Activated naive CD4-positive, alpha-beta T cell treated with anti-CD3 and anti-CD28 coated beads for 36 hours (primary cell): ENCODE measurements at regions of chr1 and their contacts with region 1.

Region 1: DNA sequence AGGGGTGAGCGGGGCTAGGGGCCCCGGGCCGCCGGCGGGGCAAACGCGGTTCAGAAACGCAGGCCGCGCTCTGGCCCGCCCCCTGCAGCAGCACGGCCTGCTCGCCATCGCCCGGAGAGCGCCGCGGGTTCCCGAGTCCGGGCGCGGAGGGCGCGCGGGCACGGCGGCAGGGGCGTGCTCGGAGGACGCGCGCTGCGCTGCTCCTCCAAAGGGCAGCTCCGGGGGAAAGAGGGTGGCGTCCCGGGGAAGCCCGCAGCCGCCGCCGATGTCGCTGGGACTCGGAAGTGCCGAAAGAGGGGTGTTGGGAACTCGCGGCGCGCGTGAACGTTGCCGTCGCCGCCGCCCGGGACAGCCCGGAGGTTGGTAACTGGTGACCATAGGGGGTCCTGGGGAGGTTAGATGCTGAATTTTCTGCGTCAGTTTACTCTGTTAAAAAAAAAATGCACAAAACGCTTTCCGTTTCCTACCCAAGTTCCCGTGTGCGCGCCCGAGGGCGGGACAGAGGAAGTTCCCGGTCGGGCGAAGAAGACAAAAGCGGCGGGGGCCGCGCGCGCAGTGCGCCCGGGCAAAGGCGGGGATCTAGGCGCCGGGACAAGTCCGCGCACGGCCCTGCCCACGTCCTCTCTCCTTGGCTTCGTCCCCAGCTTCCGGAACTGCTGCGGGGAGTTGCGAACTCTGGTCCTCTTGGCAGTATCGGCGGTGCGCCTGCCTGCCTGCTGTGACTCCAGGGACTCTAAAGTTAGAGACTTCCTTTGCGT is at the start of gene HHAT:
- DNase-seq: peak; percentile 84
- H3K4me3 Mint-ChIP-seq: peak within 1 kb of the TSS; percentile 93
- H3K27ac Mint-ChIP-seq: peak within 1 kb of the TSS; percentile 95
- H3K4me1 Mint-ChIP-seq: peaks cover 41% of the 10 kb centered on the region
- H3K27me3 Mint-ChIP-seq: peaks cover 4% of the 10 kb centered on the region
- total RNA-seq, gene HHAT: 3.6 to 3.9 TPM

Region 2: DNA sequence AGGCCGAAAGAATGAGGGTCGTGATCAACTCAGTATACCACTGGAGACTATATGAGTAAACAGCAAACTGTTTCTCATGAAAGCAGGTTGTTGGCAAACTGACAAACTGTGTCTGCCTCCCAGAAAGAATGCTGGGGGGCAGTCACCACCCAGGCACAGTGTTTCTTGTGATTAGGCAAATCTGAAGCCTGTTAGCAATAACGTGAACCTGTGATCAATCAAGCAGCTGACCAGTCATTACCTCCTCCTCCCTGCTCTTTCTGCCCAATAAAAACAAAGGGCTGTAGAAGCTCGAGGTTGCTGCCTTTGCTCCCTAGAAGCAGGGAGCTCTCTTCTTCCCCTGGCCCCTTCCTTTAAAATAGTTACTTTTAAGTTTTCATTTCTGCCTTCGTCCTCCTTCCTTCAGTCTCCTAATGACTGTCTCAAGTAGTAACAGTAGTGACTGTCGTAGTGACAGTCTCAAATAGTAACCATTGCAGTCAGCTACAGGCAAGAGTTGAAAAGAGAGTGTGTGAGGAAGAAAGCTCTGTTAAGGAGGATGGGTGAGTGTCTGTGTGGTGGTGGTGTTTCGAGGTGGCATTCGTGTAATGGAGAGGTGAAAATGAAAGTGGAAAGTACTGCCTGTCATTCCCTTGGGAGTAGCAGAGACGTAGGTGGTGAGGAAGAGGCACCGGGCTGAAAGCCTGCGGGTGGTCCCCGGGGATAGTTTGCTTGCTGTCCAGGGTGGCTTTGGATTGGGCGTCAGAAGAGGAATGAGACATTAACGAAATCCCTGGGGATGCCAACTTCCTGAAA is 14.3 kb after region 1 on chr1:
- CTCF ChIA-PET with region 1: interaction called, 10 read pairs
- intact Hi-C with region 1: loop called (anchors 1 kb)
- DNase-seq: no peak
- H3K4me3 Mint-ChIP-seq: no peak overlapping the region
- H3K27ac Mint-ChIP-seq: no peak overlapping the region
- H3K4me1 Mint-ChIP-seq: peaks cover 40% of the 10 kb centered on the region
- H3K27me3 Mint-ChIP-seq: no peaks in the 10 kb centered on the region

Region 3: DNA sequence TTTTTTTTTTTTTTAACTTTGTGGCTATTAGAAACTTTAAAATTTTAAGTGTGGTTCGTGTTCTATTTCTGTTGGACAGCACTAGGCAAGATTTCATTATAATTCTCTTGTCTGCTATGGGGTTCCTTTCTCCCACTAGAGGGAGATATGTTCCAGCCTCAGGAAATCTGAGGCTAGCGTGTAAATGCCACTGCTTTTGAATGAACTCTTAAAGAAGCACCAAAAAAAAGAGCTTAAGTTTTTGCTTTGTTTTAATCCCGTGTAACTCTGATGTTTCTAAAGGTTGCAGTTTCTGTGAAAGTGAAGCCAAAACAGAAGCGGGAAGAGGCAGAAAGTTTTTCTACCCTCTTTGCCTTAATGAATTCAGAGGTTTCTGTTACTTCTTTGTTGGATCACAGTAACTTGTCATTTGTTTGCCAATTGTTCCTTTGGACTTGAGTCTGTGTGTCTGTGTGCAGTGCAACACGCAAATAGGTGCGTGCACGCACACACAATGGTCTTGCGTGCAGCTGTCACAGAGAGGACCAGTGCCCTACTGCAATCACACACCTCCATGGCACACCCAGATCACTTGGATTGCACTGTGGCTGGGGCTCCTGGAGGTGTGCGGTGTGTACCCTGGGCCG is 32.0 kb after region 1 on chr1:
- CTCF ChIA-PET with region 1: interaction called, 7 read pairs
- intact Hi-C with region 1: loop called (anchors 1 kb)
- DNase-seq: no peak
- H3K4me3 Mint-ChIP-seq: no peak overlapping the region
- H3K27ac Mint-ChIP-seq: peak overlapping the region; percentile 13
- H3K4me1 Mint-ChIP-seq: peaks cover 10% of the 10 kb centered on the region
- H3K27me3 Mint-ChIP-seq: no peaks in the 10 kb centered on the region

Region 4: DNA sequence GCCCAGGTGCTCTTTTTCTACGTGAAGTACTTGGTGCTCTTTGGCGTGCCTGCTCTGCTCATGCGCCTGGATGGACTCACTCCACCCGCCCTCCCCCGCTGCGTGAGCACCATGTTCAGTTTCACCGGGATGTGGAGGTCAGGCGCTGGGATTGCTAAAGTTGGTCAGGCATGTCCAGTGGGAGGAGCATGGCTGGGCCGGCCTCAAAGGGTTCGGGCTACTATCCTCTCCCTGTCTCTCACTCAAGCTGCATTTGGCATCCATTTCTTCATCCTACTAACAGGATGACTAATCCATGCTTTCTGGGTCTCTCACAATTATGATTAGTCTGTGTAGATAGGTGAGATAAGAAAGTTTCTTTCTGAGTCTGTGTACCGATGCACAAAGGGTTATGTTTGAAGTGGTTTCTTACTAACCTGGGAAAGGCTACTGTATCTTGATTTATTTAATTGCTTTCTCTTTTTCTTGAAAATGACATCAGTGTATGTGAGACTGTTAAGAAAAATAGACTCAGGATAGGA is 135.7 kb after region 1 on chr1:
- CTCF ChIA-PET with region 1: no interaction called
- intact Hi-C with region 1: loop called (anchors 1 kb)
- DNase-seq: peak; percentile 22
- H3K4me3 Mint-ChIP-seq: no peak overlapping the region
- H3K27ac Mint-ChIP-seq: peak overlapping the region; percentile 57
- H3K4me1 Mint-ChIP-seq: peaks cover 23% of the 10 kb centered on the region
- H3K27me3 Mint-ChIP-seq: peaks cover 2% of the 10 kb centered on the region